ENCODE measurements at regions of chr19 and their contacts with region 1.

Region 1: GRCh38 chr19:13718733-13719132 is 45.6 kb upstream of the MRI1 start:
- DNase-seq: peak; percentile 89
- ATAC-seq: peak; percentile 67
- H3K4me3 ChIP-seq: no peak overlapping the region
- H3K27ac ChIP-seq: no peak overlapping the region
- H3K4me1 ChIP-seq: peaks cover 23% of the 10 kb centered on the region
- H3K27me3 ChIP-seq: no peaks in the 10 kb centered on the region
- CTCF ChIP-seq: peak; percentile 78

Region 2: DNA sequence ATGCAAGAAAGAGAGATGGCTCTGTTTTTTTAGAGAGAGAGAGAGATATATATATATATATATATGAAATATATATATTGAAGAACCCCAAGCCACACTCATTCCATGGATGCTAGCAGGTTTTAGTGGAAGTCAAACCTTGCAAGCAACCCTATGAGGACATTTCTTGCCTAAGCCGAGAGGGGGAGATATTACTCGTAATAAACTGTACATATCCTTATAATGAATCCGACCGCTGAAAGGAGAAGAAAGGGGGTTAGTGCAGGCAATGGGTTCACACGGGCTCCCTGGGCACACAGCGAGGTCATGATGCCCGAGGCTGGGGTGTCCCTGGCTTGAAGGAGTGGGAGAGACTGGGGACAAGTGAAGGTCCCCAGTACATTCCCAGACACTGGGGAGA is 490.2 kb before region 1 on chr19:
- CTCF ChIA-PET with region 1: no interaction called
- POLR2A ChIA-PET with region 1: interaction called, 10 read pairs
- intact Hi-C with region 1: no loop called
- DNase-seq: peak; percentile 61
- ATAC-seq: peak; percentile 55
- H3K4me3 ChIP-seq: no peak overlapping the region
- H3K27ac ChIP-seq: no peak overlapping the region
- H3K4me1 ChIP-seq: peaks cover 6% of the 10 kb centered on the region; the same call in 1 of the 2 replicates
- H3K27me3 ChIP-seq: peaks cover 7% of the 10 kb centered on the region; the same call in 1 of the 2 replicates
- CTCF ChIP-seq: peak; percentile 43; the same call in 1 of the 2 replicates

Region 3: DNA sequence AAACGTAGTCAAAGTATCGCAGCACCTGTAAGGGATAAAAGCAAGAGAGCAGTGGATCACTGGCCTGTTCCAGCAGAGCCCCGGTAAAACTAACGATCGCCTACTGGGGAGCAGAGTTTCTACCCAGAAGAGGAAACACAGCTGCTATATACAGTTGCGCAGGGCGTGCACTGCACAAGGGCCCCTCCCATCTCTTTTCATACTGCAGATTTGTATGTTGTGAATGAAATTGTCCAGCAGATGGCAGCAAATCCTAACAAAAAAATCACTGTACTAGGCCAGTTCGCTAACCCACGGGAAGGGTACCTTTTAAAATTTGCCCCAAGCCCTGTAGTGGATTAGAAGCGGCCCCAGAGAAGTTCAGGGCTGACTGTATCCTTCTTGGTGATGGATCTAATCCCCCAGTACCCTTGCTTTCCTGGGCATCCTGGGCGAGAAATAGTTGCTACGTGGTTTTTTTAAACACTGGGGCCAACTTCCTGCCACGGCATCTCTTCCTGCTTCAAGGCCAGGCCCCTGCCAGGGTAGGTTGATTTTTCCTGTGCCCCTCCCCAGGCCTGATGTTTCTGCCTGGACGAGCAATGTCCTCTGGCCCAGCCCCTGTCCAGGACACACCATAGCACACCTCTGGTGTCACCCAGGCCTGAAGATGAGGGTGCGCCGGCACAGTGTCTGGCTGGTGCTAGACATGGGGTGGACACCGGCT is 441.5 kb before region 1 on chr19:
- CTCF ChIA-PET with region 1: no interaction called
- POLR2A ChIA-PET with region 1: no interaction called
- intact Hi-C with region 1: loop called (anchors 5 kb)
- DNase-seq: peak; percentile 96
- ATAC-seq: peak; percentile 97
- H3K4me3 ChIP-seq: peak overlapping the region; percentile 37; the same call in 1 of the 2 replicates
- H3K27ac ChIP-seq: no peak overlapping the region
- H3K4me1 ChIP-seq: no peaks in the 10 kb centered on the region
- H3K27me3 ChIP-seq: 0 out of 2 replicates have a peak, but pooled peaks cover 1% of the 10 kb centered on the region
- CTCF ChIP-seq: peak; percentile 86

Region 4: GRCh38 chr19:13588957-13589833 is 129.5 kb before region 1 on chr19:
- CTCF ChIA-PET with region 1: interaction called, 10 read pairs
- POLR2A ChIA-PET with region 1: no interaction called
- intact Hi-C with region 1: no loop called
- DNase-seq: peak; percentile 84
- ATAC-seq: peak; percentile 98
- H3K4me3 ChIP-seq: peak overlapping the region; percentile 51; the same call in 1 of the 2 replicates
- H3K27ac ChIP-seq: no peak overlapping the region
- H3K4me1 ChIP-seq: no peaks in the 10 kb centered on the region
- H3K27me3 ChIP-seq: no peaks in the 10 kb centered on the region
- CTCF ChIP-seq: peak; percentile 99

Region 5: DNA sequence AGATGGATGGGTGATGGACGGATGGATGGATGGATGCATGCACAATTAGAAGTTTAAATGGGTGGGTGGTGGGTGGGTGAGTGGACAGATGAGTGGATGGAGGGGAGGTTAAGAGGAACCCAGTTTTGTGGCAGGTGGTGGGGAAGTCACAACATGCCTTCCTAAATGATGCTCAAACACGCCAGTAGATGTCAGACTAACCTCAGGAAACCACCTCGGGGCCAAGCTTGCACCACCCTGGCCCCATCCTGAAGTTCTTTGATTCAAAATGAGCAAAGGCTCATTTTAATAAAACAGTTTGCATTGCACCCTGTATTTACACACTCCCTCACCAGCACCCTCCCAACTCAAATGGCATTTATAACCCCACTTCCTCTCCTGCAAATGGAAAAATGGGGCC is 121.1 kb before region 1 on chr19:
- CTCF ChIA-PET with region 1: interaction called, 6 read pairs
- POLR2A ChIA-PET with region 1: no interaction called
- intact Hi-C with region 1: loop called (anchors 1 kb)
- DNase-seq: peak; percentile 83
- ATAC-seq: peak; percentile 94
- H3K4me3 ChIP-seq: no peak overlapping the region
- H3K27ac ChIP-seq: no peak overlapping the region
- H3K4me1 ChIP-seq: peaks cover 5% of the 10 kb centered on the region; the same call in 1 of the 2 replicates
- H3K27me3 ChIP-seq: no peaks in the 10 kb centered on the region
- CTCF ChIP-seq: peak; percentile 88

Region 6: DNA sequence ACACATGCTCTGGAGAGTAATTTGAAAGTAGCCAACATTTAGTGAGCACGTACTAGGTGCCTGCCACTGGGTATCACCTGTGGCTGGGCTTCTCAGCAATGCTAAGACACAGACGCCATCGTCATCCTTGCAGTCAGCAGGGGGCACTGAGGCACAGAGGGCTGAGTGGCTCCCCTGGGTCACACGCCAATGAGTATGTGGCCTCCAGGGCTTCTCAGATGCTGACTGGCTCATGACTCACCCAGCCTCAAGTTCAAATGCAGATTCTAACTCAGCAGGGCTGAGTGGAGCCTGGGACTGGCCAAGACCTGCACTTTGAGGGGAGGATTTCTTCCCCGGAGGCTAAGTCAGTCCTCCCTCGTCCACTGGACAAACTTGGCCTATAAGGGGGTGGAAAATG is 97.3 kb before region 1 on chr19:
- CTCF ChIA-PET with region 1: interaction called, 6 read pairs
- POLR2A ChIA-PET with region 1: no interaction called
- intact Hi-C with region 1: loop called (anchors 1 kb)
- DNase-seq: peak; percentile 99
- ATAC-seq: peak; percentile 100
- H3K4me3 ChIP-seq: no peak overlapping the region
- H3K27ac ChIP-seq: peak overlapping the region; percentile 33
- H3K4me1 ChIP-seq: peaks cover 11% of the 10 kb centered on the region
- H3K27me3 ChIP-seq: 0 out of 2 replicates have a peak, but pooled peaks cover 4% of the 10 kb centered on the region
- CTCF ChIP-seq: peak; percentile 85